Transverse colon (tissue), 4 donors: ENCODE measurements at regions of chr12 and their contacts with region 1.

Region 1: GRCh38 chr12:52506858-52507715 is 13.1 kb downstream of the KRT5 start:
- DNase-seq: no peak
- H3K4me3 ChIP-seq: no peak overlapping the region
- H3K27ac ChIP-seq: no peak overlapping the region
- H3K4me1 ChIP-seq: peaks cover 0 to 3% (median 0%) of the 10 kb centered on the region in 4 donors
- H3K27me3 ChIP-seq: peaks cover 25% of the 10 kb centered on the region
- CTCF ChIP-seq: peak; percentile 47 to 55 (median 52)
- EP300 ChIP-seq: no peak
- POLR2A ChIP-seq: no peak

Region 2: DNA sequence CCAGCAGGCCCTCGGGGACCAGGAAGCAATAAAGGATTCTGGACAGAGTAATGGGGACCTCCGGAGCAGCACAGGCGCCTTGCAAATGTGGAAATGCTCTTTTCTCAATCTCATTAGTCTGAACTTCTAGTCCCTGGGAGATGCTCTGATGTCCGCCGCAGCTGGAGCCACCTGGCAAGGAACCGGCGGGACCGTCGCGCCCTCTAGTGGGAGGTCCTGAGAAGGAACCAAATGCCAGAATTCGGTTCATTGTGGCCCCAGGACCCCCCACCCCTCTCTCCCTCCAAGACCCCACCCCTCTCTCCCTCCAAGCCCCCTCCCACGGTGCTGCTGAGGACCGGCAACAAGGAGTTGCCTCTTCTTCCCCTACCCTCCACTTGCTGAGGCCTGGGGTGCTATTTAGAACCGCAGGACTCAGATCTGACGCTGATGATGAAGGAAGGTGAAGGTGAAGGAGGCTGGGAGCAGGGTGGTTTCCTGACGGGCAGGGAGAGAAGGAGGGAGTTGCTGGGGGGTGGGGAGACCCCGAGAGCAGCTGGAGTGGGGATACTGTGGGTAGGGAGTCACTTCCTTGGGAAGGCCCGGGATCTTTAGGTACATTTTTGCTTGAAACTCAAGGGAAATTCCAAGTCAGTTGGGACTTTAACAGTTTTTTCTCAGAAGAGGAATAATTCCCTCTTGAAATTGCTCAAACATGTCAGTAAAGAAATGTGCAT is 385.1 kb before region 1 on chr12:
- in situ Hi-C with region 1: no loop called
- intact Hi-C with region 1: no loop called
- DNase-seq: peak; percentile 69
- H3K4me3 ChIP-seq: no peak overlapping the region
- H3K27ac ChIP-seq: peak overlapping the region in 1 of 4 donors; percentile 9
- H3K4me1 ChIP-seq: peaks cover 4 to 15% (median 9%) of the 10 kb centered on the region in 4 donors
- H3K27me3 ChIP-seq: peaks cover 8% of the 10 kb centered on the region
- CTCF ChIP-seq: peak; percentile 44 to 81 (median 70)
- EP300 ChIP-seq: no peak
- POLR2A ChIP-seq: no peak

Region 3: DNA sequence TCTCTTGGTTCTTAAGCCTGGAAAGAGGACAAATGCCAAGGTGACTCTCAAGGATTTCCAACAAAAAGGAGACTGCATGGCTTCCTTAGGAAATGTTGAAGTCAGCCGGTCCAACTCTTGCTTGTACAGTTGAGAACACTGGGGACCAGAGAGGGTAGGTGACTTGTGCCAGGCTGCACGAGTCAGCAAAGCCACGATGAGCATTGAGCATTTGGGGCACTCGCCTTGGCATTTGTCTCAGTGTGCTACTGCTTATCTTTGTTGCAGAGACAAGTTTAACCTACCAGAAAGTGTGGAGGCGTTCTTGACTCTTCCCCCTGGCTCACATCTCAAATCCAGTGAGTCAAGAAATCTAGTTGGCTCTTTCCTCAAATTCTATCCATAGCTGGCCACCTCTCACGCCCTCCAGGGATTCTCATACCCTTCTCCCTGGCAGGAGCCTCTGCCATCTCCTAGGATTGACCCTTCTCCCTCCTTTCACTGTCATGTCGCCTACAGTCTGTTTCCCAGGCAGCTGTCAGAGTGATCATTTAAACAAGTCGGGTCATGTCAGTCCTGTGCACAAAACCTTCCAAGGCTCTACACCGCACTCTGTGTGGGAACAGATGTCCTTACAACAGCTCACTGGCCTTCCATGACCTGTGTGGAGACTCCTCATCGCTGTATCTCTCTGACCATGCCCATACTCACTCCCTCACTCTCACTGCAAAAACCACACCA is 168.7 kb before region 1 on chr12:
- in situ Hi-C with region 1: no loop called
- intact Hi-C with region 1: no loop called
- DNase-seq: no peak
- H3K4me3 ChIP-seq: no peak overlapping the region
- H3K27ac ChIP-seq: no peak overlapping the region
- H3K4me1 ChIP-seq: peaks cover 0 to 8% (median 0%) of the 10 kb centered on the region in 4 donors
- H3K27me3 ChIP-seq: peaks cover 9% of the 10 kb centered on the region
- CTCF ChIP-seq: no peak
- EP300 ChIP-seq: no peak
- POLR2A ChIP-seq: no peak

Region 4: DNA sequence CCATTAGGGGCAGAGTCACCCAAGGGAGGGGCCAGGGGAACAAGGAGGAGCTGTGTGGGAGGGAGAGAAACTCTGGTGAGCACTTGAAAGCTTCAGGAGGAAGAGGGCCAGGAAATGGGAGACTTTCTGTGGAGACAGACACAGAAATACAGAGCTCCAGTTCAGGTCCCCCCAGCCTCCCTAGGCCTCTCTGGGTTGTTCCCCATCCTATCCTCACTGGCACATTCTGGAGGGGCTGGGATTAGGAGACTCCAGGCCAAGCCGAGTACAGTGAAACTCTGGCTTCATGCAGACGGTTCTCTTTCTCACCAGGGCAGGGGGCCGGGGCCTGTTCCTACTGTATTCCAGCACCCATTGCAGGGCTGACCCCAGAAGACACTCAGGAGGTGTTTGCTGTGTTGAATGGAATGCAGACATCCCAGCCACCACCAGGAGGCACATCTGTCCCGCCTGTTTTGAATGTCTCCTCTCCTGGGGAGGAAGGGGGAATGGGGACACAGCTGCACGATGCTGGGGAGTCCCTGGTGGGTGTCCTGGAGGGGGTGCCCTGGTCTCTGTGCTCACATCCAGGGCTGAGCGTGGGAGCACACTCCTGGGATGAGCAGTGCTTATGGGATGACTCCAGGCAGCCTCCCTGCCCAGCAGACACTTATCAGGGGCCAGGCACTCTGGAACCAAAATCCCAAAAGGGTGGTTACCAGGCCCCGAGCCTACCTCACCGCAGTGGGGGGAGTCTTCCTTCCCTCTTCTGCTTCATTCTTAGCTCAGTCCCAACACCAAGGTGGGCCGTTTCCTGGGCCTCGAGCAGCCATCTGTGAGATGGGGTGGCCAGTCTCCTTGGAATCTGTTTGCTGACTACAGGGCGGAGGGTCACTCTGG is 116.1 kb before region 1 on chr12:
- in situ Hi-C with region 1: loop called in 1 of 4 experiments (anchors 10 kb)
- intact Hi-C with region 1: no loop called
- DNase-seq: peak; percentile 22
- H3K4me3 ChIP-seq: no peak overlapping the region
- H3K27ac ChIP-seq: no peak overlapping the region
- H3K4me1 ChIP-seq: peaks cover 0 to 5% (median 0%) of the 10 kb centered on the region in 4 donors
- H3K27me3 ChIP-seq: no peaks in the 10 kb centered on the region
- CTCF ChIP-seq: peak; percentile 28 to 68 (median 45)
- EP300 ChIP-seq: no peak
- POLR2A ChIP-seq: no peak

Region 5: DNA sequence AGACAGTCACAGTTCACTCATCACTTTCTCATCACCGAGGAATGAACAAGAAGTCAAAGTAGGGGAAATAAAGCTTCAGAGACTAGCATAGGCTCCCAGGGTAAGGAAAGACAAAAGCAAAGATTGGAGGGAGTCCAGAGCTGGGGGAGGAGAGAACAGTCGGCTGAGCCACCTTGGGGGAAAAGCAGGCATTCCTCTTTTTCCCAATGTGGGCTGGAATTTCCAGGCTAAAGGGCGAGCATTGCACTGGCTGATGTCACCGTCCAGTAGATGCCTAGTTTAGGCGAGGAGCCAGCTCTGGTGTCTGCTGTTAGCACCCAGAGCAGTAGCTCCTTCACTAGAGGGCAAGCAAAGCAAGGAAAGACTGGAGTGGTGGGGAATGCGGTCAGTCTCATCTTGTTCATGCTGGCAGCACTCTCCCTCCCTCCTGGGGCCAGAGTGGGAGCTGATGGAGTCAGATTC is 64.5 kb before region 1 on chr12:
- in situ Hi-C with region 1: no loop called
- intact Hi-C with region 1: no loop called
- DNase-seq: no peak
- H3K4me3 ChIP-seq: no peak overlapping the region
- H3K27ac ChIP-seq: no peak overlapping the region
- H3K4me1 ChIP-seq: peaks cover 0 to 1% (median 0%) of the 10 kb centered on the region in 4 donors
- H3K27me3 ChIP-seq: no peaks in the 10 kb centered on the region
- CTCF ChIP-seq: no peak
- EP300 ChIP-seq: no peak
- POLR2A ChIP-seq: no peak

Region 6: DNA sequence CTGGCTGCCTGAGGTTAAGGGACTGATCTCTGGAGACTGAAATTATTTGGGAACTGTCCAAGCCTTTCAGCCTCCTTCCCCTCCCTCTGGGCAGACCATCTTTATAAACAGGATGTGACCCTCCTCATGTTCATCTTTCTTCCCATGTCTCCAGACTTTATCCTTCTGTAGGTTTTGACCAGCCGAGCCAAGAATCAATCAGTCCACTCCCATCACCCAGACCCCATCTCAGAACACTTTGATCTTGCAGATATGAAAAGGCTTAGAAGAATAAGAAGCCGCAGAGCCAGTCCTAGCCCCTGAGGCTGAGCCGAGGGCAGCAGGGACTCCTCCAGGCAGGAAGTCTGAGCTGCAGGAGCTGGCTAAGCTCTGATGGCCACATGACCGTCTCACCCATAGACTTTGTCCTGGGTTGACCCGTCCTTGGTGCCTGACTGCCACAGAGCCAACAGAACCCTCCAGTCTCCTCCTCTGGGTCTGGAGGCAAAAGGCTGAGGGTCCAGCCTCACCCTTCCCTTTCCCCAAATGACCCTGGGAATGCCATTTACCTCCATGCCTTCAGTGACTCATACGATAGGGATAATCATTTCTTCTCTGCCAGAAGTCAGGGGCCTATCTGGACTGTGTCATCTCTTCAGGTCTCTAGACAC is 44.3 kb after region 1 on chr12:
- in situ Hi-C with region 1: no loop called
- intact Hi-C with region 1: no loop called
- DNase-seq: no peak
- H3K4me3 ChIP-seq: no peak overlapping the region
- H3K27ac ChIP-seq: no peak overlapping the region
- H3K4me1 ChIP-seq: no peaks in the 10 kb centered on the region
- H3K27me3 ChIP-seq: no peaks in the 10 kb centered on the region
- CTCF ChIP-seq: no peak
- EP300 ChIP-seq: no peak
- POLR2A ChIP-seq: no peak